ENCODE measurements at regions of chr1 and their contacts with region 1.

Region 1: DNA sequence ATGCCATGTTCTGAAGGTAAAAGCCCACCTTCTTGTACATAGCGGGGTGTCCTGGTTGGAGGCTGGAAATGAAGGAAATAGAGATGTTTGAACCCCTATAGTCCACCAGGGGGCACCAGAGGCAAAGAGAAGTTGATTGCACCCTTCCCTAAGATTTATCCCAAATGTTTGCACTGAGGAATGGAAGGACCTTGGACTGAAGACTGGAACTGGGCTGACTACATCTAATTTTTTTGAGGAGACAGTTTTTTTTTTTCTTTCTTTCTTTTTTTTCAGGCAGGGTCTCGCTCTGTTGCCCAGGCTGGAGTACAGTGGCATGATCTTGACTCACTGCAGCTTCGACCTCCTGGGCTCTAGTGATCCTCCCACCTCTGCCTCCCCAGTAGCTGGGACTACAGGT is 55.3 kb upstream of the EIF4G3 start:
- DNase-seq: peak; percentile 26
- H3K4me3 ChIP-seq: no peak overlapping the region
- H3K27ac ChIP-seq: no peak overlapping the region
- H3K4me1 ChIP-seq: no peaks in the 10 kb centered on the region
- H3K27me3 ChIP-seq: no peaks in the 10 kb centered on the region
- CTCF ChIP-seq: peak; percentile 50 to 69

Region 2: DNA sequence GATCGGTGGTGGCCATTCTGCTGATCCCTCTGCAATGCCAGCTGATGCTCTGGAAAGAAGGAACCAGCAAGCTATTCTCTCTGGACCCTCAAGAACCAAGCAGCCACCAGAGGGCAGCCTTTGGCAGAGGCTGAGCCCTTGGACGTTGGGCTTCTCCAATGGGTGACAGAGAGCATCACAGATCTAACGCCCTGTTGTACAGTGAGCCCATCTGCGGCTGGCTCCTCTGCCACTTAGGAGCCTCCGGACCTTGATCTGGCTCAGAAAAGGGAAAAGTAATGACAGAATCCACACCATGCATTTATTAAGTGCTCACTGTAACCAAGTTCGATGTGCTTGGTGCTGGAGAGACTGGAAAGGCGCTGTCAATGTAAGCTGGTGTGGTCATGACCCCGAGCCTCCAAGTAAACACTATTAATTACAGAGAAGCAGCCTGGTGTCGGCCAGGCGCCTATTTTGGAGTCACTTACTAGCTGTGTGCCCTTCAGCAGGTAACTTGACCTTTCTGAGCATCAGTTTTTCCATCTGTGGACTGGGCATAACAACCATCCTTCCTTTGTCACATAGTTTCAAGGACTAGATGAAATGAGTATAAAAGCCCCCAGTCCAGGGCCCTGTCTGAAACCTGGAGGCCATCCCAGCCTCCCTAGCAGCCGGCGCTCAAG is 23.4 kb after region 1 on chr1:
- CTCF ChIA-PET with region 1: interaction called, 4 read pairs
- dilution Hi-C with region 1: no loop called
- in situ Hi-C with region 1: no loop called
- intact Hi-C with region 1: loop called (anchors 1 kb)
- DNase-seq: peak; percentile 72
- H3K4me3 ChIP-seq: no peak overlapping the region
- H3K27ac ChIP-seq: no peak overlapping the region
- H3K4me1 ChIP-seq: peaks cover 33% of the 10 kb centered on the region
- H3K27me3 ChIP-seq: no peaks in the 10 kb centered on the region
- CTCF ChIP-seq: peak; percentile 87 to 91

Region 3: DNA sequence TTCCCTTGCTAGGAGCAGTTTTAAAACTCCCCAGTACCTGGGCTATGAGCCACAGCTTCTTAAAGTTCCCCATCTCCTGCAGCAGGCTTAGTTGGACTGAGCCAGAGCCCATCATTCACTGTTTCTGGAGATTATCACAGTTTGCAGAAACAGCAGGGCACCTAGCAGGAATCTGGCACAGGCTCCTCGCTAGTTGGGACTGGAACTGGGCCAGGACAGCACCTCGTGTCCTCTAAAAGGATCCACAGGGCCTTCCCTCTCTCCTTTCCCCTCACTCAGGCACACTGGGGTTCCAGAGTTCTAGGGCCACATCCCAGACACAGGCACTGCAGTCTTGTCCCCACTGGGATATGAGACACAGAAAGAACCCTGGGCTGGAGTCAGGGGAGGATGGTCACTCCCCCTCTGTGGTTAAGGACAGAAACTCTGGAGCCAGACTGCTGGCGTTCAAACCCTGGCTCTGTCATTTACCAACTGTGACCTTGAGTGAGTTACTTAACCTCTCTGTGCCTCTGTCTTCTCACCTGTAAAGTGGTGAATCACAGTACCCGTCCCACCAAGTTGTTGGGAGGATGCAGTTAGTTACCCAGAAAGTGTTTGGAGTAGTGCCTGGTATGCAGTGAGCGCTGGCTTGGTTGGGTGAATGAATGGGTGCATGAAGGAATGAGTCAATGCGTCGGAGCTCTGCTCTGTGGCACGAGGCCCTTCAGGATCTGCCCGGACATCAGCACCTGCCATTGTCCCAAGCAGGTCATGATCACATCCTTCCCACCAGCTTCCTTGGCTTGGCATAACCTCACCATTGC is 77.0 kb after region 1 on chr1:
- CTCF ChIA-PET with region 1: interaction called, 15 read pairs
- dilution Hi-C with region 1: no loop called
- in situ Hi-C with region 1: no loop called
- intact Hi-C with region 1: no loop called
- DNase-seq: peak; percentile 90
- H3K4me3 ChIP-seq: no peak overlapping the region
- H3K27ac ChIP-seq: peak overlapping the region; percentile 2
- H3K4me1 ChIP-seq: peaks cover 45% of the 10 kb centered on the region
- H3K27me3 ChIP-seq: no peaks in the 10 kb centered on the region
- CTCF ChIP-seq: no peak

Region 4: DNA sequence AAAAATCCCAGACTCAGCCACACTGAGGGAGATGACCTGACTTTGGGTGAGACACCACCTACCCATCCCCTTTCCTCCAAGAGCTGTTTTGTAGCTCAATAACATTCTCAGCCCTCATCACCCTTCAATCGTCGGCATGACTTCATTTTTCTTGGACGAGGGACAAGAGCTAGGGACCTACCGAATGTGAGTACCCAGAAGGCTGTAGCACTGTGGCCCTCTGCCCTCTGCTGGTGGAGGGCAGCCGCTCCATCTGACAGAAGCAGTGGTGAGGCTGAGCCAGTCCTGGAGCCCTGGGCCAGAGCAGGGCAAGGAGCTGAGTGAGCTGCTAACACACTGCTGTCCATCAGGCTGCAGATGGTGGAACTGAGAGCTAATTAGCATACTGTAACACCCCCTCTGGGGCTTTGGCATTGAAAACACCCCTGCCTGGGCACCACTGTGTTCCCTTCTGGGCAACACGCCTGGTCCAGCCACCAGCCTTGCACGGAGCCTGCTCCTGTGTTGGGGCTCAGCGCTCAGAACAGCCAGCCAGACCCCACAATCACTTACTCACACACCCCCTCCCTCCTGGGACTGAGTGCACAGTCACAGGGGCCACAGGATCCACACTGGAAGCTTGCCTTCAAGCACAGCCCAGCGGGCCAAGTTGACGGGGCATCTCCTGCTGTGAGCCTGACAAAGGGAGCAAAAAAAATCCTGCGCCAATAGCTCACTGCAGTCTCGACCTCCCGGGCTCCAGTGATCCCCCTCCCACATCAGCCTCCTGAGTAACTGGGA is 258.9 kb after region 1 on chr1:
- CTCF ChIA-PET with region 1: no interaction called
- dilution Hi-C with region 1: no loop called
- in situ Hi-C with region 1: no loop called
- intact Hi-C with region 1: loop called (anchors 5 kb)
- DNase-seq: peak; percentile 56
- H3K4me3 ChIP-seq: no peak overlapping the region
- H3K27ac ChIP-seq: no peak overlapping the region
- H3K4me1 ChIP-seq: no peaks in the 10 kb centered on the region
- H3K27me3 ChIP-seq: no peaks in the 10 kb centered on the region
- CTCF ChIP-seq: peak; percentile 61 to 74

Region 5: DNA sequence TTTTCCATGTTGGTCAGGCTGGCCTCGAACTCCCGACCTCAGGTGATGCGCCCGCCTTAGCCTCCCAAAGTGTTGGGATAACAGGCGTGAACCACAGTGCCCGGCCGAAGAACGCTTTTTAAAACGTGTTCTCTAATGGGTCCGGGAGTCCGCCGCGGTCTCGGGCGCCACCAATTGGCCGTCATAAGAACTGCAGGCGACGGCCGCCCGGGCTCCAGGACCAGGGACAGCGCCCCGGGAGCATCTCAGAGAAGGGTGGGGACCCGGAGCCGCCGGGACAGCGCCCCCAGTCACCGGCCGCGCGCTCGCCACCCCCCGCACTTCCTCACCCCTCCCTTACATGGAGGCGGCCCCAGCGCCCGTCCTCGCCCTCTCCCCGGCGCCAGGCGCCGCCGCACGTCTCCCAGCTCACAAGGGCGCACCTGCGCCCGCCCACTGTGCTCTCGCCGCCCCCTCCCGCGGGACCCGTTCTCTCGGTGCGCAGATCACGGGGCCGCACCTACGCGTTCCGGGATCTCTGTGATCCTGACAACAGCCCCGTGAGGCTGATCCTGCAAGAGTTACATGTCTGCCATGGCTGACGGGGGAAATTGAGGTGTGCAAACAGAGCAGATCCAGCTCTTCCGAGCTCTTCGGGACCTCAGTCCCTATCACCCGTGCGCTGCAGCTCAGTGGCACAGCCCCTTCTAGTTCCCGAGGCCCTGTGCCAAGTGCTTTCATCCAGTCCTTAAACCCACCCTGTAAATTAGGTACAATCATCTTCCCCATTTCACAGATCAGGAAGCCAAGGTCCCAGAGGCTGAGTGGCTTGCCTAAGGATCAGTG is 427.3 kb after region 1 on chr1:
- CTCF ChIA-PET with region 1: no interaction called
- dilution Hi-C with region 1: no loop called
- in situ Hi-C with region 1: no loop called
- intact Hi-C with region 1: loop called (anchors 1 kb)
- DNase-seq: peak; percentile 62
- H3K4me3 ChIP-seq: no peak overlapping the region
- H3K27ac ChIP-seq: no peak overlapping the region
- H3K4me1 ChIP-seq: peaks cover 5% of the 10 kb centered on the region
- H3K27me3 ChIP-seq: no peaks in the 10 kb centered on the region
- CTCF ChIP-seq: peak; percentile 76 to 89